ENCODE measurements at regions of chr1 and their contacts with region 1.

Region 1: DNA sequence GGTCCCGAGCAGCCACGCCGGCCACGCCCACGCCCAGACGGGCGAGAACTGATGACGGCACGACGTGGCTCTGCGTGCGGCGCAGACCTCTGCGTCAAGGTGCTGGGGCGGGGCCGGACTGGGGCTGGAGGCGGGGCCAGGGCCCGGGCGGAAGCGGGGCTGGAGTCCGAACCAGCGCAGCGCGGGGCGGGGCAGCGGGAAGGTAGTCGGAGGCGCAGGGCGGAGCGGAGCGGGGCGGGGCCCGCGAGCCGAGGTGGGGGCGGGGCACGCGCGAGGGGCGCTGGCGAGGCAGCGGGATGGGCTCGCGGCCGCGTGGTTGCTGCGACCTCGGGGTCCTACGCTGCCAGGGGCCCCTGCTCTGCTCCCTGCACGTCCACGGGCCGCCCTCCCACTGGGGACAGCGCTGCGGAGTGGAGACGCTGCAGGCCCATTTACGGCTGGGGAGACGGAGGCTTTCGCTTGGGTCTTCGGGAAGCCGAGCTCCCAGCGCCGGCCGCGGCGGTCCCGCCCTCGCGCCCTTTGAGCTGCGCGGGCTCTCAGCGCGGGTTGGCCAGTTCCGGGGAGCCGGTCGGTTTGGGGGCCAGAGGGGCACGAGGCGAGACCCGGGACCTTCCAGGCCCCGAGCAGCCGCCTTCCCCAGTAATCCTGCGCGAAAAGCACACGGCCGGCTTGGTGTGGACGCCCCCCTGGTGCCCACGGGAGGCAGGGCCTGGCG is at the start of gene PEX10:
- DNase-seq: peak; percentile 96
- H3K4me3 ChIP-seq: peak within 1 kb of the TSS; percentile 93 to 95
- H3K27ac ChIP-seq: peak within 1 kb of the TSS; percentile 88 to 96
- H3K4me1 ChIP-seq: peaks cover 50% of the 10 kb centered on the region
- H3K27me3 ChIP-seq: no peaks in the 10 kb centered on the region
- CTCF ChIP-seq: no peak
- POLR2A ChIP-seq: peak; percentile 69
- total RNA-seq, gene PEX10: 38.3 to 49.9 TPM

Region 2: DNA sequence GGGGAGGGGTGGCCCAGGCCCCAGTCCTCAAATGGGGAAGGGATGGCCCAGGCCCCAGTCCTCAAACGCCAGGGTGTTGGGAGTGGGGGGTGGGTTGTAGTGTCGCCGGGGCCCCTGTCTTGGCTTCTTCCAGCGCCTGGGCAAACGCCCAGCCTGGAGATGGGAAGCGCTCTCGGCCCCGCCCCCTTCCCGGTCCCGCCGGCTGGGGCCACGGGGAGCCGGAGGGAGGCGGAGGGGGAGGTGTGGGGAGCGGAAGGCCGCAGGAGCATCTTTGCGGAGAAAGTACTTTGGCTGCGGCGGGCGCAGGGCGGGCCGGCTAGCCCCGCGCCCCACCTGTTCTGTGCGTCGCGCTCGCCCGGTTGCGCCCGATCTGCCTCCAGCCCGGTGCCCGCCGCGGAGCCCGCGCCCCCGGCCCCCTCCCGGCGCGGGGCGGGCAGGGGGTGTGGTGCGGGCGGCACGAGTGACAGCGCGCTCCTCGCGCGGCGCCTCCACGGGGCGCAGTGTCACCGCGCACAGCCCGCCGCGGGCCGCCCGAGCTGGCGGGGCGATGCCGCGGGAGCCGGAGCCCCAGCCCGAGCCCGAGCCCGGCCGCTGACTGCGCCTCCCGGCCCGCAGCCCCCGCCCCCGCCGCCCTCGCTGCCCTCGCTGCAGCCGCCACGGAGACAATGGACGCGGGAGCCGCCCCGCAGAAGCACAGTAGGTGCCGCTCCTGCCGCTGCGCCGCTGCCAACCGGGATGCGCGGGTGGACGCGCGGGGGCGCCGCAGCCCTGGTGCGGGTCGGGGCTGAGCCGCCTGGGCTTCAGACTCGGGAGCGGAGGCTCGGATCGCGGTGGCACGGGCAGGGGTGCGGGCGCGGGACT is 30.8 kb after region 1 on chr1:
- intact Hi-C with region 1: no loop called
- DNase-seq: no peak
- H3K4me3 ChIP-seq: peak overlapping the region in 1 of 2 donors; percentile 1
- H3K27ac ChIP-seq: no peak overlapping the region
- H3K4me1 ChIP-seq: no peaks in the 10 kb centered on the region
- H3K27me3 ChIP-seq: no peaks in the 10 kb centered on the region
- CTCF ChIP-seq: no peak
- POLR2A ChIP-seq: no peak

Region 3: DNA sequence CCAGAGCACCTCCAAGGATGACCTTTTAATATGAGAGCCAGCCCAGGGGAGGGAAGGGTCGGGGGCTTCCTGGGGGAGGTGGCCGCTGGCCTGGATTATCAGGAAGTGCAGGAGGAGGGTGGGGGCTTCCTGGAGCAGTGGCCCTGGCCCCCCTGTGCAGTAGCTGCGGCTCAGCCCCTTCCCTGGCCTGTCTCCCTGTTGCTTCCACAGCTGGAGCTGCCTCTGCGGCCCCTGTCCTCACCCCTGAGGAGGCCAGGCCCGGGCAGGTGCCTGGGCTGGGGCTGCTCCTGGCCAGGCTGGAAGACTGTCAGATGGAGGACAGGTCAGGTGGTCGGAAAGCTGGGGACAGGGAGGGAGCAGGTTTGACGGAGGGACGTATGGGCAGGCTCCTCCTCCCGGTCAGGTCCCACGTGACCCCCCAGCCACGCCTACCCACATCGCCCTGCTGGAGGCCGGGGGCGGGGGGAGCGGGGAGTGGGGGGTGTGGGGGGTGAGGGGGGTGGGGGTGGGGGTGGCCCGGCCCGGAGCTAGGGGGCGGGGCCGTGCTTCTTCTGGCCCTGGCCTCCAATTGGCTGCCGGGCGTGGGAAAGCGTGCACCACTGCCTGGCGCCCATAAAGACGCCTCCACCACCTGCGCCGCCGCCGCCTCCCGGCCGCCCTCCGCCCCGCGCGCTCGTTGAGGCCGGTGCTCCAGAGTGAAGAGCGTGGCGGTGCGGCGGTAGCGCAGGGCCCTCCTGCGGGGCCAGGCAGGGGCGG is 133.3 kb after region 1 on chr1:
- intact Hi-C with region 1: loop called (anchors 1 kb)
- DNase-seq: peak; percentile 89
- H3K4me3 ChIP-seq: peak overlapping the region; percentile 17 to 38
- H3K27ac ChIP-seq: peak overlapping the region; percentile 98 to 99
- H3K4me1 ChIP-seq: peaks cover 23% of the 10 kb centered on the region
- H3K27me3 ChIP-seq: no peaks in the 10 kb centered on the region
- CTCF ChIP-seq: no peak
- POLR2A ChIP-seq: peak; percentile 35

Region 4: DNA sequence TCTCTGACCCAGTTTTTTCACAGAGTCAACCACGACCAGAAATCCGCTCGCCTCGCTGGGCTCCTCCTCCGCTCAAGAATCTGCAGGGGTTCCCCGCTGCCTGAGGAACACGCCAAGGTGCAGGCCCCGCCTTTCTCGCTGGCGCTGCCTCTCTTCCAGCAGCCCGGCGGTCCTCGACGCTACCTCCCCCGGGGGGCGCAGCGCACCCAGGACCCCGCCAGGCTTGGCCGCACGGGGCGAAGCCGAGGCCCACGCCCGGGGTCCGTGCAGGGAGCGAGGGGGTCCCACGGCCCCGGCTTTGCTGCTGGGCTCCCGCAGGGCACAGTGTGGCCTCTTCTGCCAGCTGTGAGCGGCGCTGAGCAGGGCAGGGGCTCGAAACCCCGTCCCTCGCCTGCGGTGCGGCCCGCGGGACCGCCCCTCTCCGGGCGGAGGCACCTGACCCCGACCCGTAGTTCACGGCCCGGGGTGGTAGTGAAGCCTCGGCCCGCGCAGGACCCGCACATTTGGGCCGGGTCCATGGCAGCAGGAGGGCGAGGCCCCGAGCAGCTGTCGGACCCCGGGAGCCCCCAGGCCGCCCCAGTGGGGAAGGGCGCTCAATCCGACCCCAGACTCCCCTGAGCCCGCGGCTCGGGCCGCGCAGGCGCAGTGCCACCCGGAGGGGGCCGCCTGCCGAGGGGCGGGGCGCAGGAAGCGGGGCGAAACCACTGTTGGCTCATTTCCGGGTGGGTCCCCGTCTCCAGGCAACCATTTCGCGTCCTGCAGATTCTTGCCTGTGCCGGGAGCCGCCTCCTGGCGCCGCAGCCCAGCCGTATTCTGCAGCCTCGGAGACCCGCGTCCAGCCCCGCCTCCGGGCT is 230.1 kb after region 1 on chr1:
- intact Hi-C with region 1: loop called (anchors 10 kb)
- DNase-seq: peak; percentile 87
- H3K4me3 ChIP-seq: peak overlapping the region; percentile 75 to 77
- H3K27ac ChIP-seq: peak overlapping the region; percentile 69 to 84
- H3K4me1 ChIP-seq: peaks cover 5% of the 10 kb centered on the region
- H3K27me3 ChIP-seq: no peaks in the 10 kb centered on the region
- CTCF ChIP-seq: peak in 2 of 4 experiments; percentile 41 to 48
- POLR2A ChIP-seq: peak; percentile 86

Region 5: GRCh38 chr1:3423245-3423829 is 1010.7 kb after region 1 on chr1:
- intact Hi-C with region 1: loop called (anchors 5 kb)
- DNase-seq: no peak
- H3K4me3 ChIP-seq: no peak overlapping the region
- H3K27ac ChIP-seq: no peak overlapping the region
- H3K4me1 ChIP-seq: no peaks in the 10 kb centered on the region
- H3K27me3 ChIP-seq: no peaks in the 10 kb centered on the region
- CTCF ChIP-seq: no peak
- POLR2A ChIP-seq: no peak

Measured in prostate gland (tissue), 2 donors.